Ascending aorta (tissue), 2 donors: ENCODE measurements at regions of chr16 and their contacts with region 1.

Region 1: GRCh38 chr16:352547-353403 is at the start of gene AXIN1:
- DNase-seq: peak; percentile 98 to 99
- H3K4me3 ChIP-seq: peak within 1 kb of the TSS; percentile 93 to 96
- H3K27ac ChIP-seq: peak within 1 kb of the TSS; percentile 70 to 83
- H3K4me1 ChIP-seq: peaks cover 12% of the 10 kb centered on the region in 2 donors
- H3K27me3 ChIP-seq: no peaks in the 10 kb centered on the region
- CTCF ChIP-seq: peak in 2 of 3 experiments; percentile 35 to 65
- total RNA-seq, gene AXIN1: 27.6 TPM

Region 2: GRCh38 chr16:234468-235305 is 118.1 kb before region 1 on chr16 and contains the start of gene FAM234A:
- intact Hi-C with region 1: loop called (anchors 2 kb)
- DNase-seq: peak; percentile 73 to 95
- H3K4me3 ChIP-seq: peak within 1 kb of the TSS; percentile 70 to 75
- H3K27ac ChIP-seq: peak within 1 kb of the TSS; percentile 82 to 91
- H3K4me1 ChIP-seq: peaks cover 6 to 9% of the 10 kb centered on the region in 2 donors
- H3K27me3 ChIP-seq: no peaks in the 10 kb centered on the region
- CTCF ChIP-seq: peak; percentile 33 to 49 (median 41)
- total RNA-seq, gene FAM234A: 67.7 TPM

Region 3: DNA sequence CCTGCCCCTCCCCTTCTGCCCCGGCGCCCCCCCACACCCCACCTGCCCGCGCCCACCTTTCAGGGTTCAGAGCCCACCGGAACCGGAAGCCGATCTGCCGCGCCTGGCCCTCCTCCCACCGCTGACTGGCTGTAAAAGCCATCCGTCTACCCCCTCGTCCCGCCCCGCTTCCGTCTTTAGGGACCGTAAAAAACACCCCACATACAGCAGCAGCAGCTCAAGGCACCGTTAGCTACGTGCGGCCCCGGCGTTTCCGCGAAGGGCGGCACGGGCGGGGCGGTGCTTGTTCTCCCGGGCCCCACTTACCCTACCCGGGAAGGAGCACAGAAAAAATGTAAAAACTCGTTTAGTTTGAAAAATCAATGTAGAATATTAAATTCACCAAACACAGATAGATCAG is 17.7 kb after region 1 on chr16 and contains the start of gene MRPL28:
- intact Hi-C with region 1: loop called (anchors 1 kb)
- DNase-seq: peak; percentile 78 to 98
- H3K4me3 ChIP-seq: peak within 1 kb of the TSS; percentile 53 to 70
- H3K27ac ChIP-seq: peak within 1 kb of the TSS; percentile 36 to 59
- H3K4me1 ChIP-seq: peaks cover 8 to 12% of the 10 kb centered on the region in 2 donors
- H3K27me3 ChIP-seq: no peaks in the 10 kb centered on the region
- CTCF ChIP-seq: no peak
- total RNA-seq, gene MRPL28: 47.8 TPM

Region 4: GRCh38 chr16:381789-382717 is 29.3 kb after region 1 on chr16 and contains the start of gene PGAP6:
- intact Hi-C with region 1: loop called (anchors 1 kb)
- DNase-seq: no peak
- H3K4me3 ChIP-seq: peak within 1 kb of the TSS; percentile 86 to 98
- H3K27ac ChIP-seq: peak within 1 kb of the TSS; percentile 64
- H3K4me1 ChIP-seq: peaks cover 5 to 12% of the 10 kb centered on the region in 2 donors
- H3K27me3 ChIP-seq: no peaks in the 10 kb centered on the region
- CTCF ChIP-seq: no peak
- total RNA-seq, gene PGAP6: 47.6 TPM

Region 5: GRCh38 chr16:401468-402348 is 48.9 kb after region 1 on chr16 and contains the start of gene DECR2:
- intact Hi-C with region 1: loop called (anchors 2 kb)
- DNase-seq: peak; percentile 75 to 97
- H3K4me3 ChIP-seq: peak within 1 kb of the TSS; percentile 63 to 76
- H3K27ac ChIP-seq: peak within 1 kb of the TSS; percentile 88 to 93
- H3K4me1 ChIP-seq: peaks cover 4 to 10% of the 10 kb centered on the region in 2 donors
- H3K27me3 ChIP-seq: no peaks in the 10 kb centered on the region
- CTCF ChIP-seq: peak; percentile 21 to 67 (median 63)
- total RNA-seq, gene DECR2: 44.0 TPM

Region 6: GRCh38 chr16:414395-415169 is 61.8 kb after region 1 on chr16:
- intact Hi-C with region 1: no loop called
- DNase-seq: no peak
- H3K4me3 ChIP-seq: no peak overlapping the region
- H3K27ac ChIP-seq: no peak overlapping the region
- H3K4me1 ChIP-seq: no peaks in the 10 kb centered on the region
- H3K27me3 ChIP-seq: no peaks in the 10 kb centered on the region
- CTCF ChIP-seq: no peak

Region 7: DNA sequence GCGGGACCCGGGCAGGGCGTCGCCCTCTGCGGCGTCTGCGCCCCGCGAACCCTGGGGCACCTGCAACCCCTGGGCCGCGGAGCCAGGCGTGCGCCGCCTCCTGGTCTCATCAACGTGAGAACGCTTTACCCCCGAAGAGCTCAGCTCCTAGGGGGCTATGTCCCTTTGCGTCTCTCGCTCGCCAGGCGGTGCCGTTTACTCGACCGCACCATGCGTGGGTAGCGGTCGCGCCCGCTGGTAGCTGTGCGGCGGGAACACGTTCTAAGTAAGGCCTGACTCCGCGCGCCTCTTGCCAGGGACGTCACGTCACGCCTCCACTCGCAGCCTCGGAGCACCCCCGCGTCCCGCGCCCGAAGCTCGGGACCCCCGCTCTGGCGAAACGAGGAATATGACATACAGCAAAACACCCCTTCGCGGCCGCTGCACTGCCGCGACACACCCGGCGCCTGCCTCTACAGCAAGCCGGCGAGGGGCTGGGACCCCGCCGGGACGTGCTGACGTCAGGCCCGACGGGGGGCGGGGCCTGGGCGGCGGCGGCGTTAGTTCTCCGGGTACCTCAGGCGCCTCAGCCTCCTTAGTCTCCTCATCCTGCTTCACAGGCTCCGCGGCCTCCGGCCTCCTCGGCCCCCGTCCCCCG is 72.4 kb after region 1 on chr16 and contains the start of gene RAB11FIP3:
- intact Hi-C with region 1: loop called (anchors 1 kb)
- DNase-seq: peak; percentile 43 to 88
- H3K4me3 ChIP-seq: peak within 1 kb of the TSS; percentile 76 to 81
- H3K27ac ChIP-seq: peak within 1 kb of the TSS; percentile 95 to 97
- H3K4me1 ChIP-seq: peaks cover 0 to 20% of the 10 kb centered on the region in 2 donors
- H3K27me3 ChIP-seq: no peaks in the 10 kb centered on the region
- CTCF ChIP-seq: peak in 2 of 3 experiments; percentile 5 to 32
- total RNA-seq, gene RAB11FIP3: 47.0 TPM

Region 8: DNA sequence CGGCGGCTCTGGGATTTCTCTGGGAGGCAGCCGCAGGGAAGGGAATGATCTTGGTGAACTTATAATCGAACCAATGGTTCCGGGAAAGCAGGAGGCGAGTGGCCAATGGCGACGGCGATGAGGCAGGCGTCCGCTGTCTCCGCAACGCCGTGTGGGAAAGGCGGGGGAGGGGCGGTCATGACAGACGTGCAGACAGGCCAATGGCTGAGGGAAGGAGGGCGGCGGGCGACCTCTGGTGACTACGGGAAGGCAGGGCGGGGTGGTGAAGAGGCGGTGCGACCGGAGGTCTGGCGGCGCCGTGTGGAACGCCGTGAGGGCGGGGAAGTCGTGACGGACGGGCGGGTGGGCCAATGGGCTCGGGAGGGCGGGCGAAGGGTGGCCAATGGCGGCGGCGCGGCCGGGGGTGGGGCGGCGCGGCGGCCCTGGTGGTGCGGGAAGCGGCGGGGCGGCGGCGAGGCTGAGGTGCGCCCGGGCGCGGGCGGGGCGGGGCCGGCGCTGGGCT is 236.9 kb after region 1 on chr16 and contains the start of gene RAB40C:
- intact Hi-C with region 1: loop called (anchors 1 kb)
- DNase-seq: peak; percentile 92 to 99
- H3K4me3 ChIP-seq: peak within 1 kb of the TSS; percentile 85 to 92
- H3K27ac ChIP-seq: peak within 1 kb of the TSS; percentile 92 to 94
- H3K4me1 ChIP-seq: peaks cover 8 to 32% of the 10 kb centered on the region in 2 donors
- H3K27me3 ChIP-seq: no peaks in the 10 kb centered on the region
- CTCF ChIP-seq: no peak
- total RNA-seq, gene RAB40C: 29.8 TPM